PC-3 (cell line): ENCODE measurements at regions of chr16 and their contacts with region 1.

Region 1: DNA sequence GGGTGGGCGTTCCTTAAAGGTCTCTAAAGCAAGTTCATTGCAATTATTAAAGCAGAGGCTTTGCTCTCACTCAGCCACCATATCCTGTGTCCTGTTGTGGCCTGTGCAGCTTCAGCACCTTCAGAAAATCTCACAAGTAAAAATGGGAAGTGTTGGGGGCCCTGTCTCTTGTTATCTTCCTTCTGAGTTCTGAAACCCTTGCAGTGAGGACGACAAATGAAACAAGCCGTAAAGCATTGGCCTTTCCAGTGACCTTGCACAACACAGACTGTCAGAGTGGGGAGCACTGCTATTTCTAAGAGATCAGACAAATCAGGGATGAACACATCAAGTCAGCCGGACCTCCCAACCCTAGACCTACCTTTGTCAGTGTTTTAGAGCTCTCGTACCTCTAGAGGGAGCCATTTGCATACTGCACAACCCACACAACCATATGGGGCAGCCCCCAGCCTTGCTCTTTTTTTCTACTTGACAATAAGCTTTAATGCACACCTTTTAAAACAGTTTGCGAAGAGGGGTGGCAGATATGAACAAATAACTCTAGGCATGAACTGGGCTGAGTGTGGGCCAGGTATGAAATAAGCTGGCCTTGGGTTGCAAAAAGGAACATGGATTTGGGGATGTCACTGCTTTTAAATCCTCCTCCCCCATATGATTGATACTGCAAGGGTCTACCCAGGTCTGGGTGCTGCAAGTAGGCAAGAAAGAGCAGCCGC is 89.8 kb downstream of the KATNIP start:
- DNase-seq: peak; percentile 62
- ATAC-seq: peak; percentile 69; the same call in 1 of the 2 replicates
- H3K4me3 ChIP-seq: no peak overlapping the region
- H3K27ac ChIP-seq: no peak overlapping the region
- H3K4me1 ChIP-seq: no peaks in the 10 kb centered on the region
- H3K27me3 ChIP-seq: no peaks in the 10 kb centered on the region
- CTCF ChIP-seq: peak; percentile 78

Region 2: DNA sequence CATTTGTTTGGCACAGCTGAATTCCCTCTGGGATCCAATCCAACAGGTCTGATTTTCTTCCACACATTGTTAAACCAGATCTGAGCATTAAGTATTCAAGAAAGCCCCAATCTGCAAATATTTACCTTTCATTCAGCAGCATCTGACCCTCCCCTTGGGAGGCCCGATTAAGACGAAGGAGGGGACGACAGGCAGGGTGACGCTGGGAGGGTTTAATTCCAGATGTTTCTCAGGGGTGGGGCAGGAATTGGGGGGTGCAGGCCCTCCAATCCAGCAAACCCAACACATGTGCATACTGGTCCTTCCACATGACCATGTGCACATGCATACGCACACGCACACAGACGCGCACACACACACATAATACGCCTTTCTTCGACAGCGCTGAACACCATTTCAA is 183.3 kb after region 1 on chr16:
- CTCF ChIA-PET with region 1: no interaction called
- POLR2A ChIA-PET with region 1: no interaction called
- intact Hi-C with region 1: loop called (anchors 5 kb)
- DNase-seq: peak; percentile 15
- ATAC-seq: no peak
- H3K4me3 ChIP-seq: no peak overlapping the region
- H3K27ac ChIP-seq: no peak overlapping the region
- H3K4me1 ChIP-seq: no peaks in the 10 kb centered on the region
- H3K27me3 ChIP-seq: peaks cover 25% of the 10 kb centered on the region
- CTCF ChIP-seq: no peak

Region 3: GRCh38 chr16:27951489-27952120 is 311.9 kb after region 1 on chr16:
- CTCF ChIA-PET with region 1: no interaction called
- POLR2A ChIA-PET with region 1: no interaction called
- intact Hi-C with region 1: no loop called
- DNase-seq: no peak
- ATAC-seq: no peak
- H3K4me3 ChIP-seq: no peak overlapping the region
- H3K27ac ChIP-seq: no peak overlapping the region
- H3K4me1 ChIP-seq: no peaks in the 10 kb centered on the region
- H3K27me3 ChIP-seq: peaks cover 28% of the 10 kb centered on the region
- CTCF ChIP-seq: no peak

Region 4: GRCh38 chr16:28069971-28070794 is 430.5 kb after region 1 on chr16:
- CTCF ChIA-PET with region 1: no interaction called
- POLR2A ChIA-PET with region 1: no interaction called
- intact Hi-C with region 1: loop called (anchors 5 kb)
- DNase-seq: no peak
- ATAC-seq: no peak
- H3K4me3 ChIP-seq: no peak overlapping the region
- H3K27ac ChIP-seq: no peak overlapping the region
- H3K4me1 ChIP-seq: no peaks in the 10 kb centered on the region
- H3K27me3 ChIP-seq: 0 out of 2 replicates have a peak, but pooled peaks cover 8% of the 10 kb centered on the region
- CTCF ChIP-seq: no peak